Right ventricle myocardium inferior (tissue), 1 donor: ENCODE measurements at regions of chr3 and their contacts with region 1.

Region 1: DNA sequence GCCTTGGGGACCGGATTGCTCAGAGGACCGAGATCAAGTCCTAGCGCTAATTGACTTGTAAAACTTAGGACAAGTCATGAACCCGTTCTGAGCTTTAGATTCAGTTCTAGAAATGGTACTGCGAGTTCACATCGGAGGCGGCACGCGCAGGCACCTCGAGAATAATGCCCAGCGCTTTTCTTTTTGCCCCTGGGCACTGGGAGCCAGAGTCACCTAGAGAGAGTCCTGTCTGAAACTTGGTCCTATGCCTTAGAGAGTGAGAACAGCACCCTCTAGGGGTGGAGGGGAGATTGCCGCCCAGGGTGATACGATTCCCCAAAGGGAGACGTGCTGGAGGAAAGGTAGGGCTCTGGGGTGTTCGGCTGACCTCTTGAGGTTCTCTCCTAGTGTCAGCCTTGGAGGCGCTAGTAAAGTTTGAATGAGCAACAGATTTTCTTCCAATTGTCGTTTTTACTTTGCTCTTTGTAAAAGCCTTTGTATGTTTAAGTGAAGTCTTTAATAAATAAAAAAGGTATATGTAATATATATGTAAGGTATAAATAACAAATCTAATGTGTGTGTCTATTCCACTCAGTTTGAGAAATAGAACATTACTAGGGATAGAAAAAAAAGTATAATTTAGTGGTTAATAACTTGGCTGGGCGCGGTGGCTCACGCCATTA is 826 bp downstream of the EEF1AKMT4 start:
- DNase-seq: peak; percentile 87
- ATAC-seq: peak; percentile 82

Region 2: DNA sequence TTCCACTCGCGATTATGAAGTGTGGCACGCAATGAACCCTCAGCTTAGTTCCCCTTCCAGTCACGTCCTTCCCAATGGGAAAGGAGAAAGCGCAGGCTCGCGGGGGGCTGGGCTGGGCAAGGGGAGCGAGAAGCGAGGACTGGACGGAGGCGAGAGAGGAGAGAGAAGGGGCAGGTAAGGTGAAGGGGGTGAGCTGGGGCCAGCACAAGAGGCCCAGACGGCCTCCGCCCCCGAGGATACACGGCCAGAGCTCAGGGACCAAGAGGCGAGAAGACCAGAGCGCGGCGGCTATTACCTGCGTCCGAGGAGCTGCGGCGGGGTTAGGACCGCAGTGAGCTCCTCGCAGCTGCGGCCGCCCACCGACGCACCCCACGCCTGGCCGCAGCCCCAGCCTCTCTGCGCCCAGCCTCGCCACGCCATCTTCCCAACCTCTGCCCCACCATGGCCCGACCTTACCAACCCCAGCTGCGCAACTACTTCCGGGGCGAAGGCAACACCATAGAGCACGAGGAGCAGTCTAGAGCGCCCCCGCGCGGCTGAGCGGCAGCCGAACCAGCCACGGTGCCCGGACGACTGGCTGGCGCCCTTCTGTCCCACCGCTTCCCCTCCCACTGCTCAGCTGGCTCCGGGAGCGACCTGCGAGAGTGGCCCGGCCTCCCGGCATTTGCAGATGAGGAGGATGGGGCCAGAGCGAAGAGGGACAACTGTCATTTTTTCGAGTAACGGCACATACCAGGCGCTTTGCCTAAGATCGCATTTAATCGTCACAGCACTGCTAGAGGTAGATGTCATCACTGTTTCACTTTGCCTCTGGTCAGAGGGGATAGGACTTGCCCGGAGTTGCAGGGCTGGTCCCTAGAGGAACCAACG is 365.6 kb before region 1 on chr3 and contains the start of gene PARL:
- intact Hi-C with region 1: loop called (anchors 5 kb)
- DNase-seq: peak; percentile 99
- ATAC-seq: peak; percentile 100
- total RNA-seq, gene PARL: 56.5 TPM

Region 3: DNA sequence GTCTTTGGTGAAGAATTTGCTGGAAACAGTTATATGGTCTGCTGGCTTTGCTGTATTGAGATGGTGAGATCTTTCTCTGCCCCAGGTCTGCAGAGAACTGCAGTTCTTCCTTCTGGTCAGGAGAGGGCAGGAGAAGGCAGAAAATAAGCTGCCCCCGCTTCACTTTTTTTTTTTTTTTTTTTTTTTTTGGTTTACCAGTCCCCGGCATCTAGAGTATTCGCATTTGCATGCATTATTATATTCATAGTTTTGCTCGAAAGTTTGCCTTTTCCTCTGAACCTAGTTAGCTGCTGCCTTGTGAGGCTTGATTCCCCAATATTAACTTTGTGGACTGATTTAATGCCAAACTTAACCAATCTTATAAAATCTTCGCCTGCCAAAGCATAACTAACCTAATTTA is 355.0 kb before region 1 on chr3:
- intact Hi-C with region 1: loop called (anchors 2 kb)
- DNase-seq: no peak
- ATAC-seq: no peak

Region 4: GRCh38 chr3:184017672-184018423 is 232.4 kb before region 1 on chr3 and contains the start of gene ABCC5:
- intact Hi-C with region 1: loop called (anchors 5 kb)
- DNase-seq: peak; percentile 97
- ATAC-seq: peak; percentile 99
- total RNA-seq, gene ABCC5: 48.2 TPM

Region 5: DNA sequence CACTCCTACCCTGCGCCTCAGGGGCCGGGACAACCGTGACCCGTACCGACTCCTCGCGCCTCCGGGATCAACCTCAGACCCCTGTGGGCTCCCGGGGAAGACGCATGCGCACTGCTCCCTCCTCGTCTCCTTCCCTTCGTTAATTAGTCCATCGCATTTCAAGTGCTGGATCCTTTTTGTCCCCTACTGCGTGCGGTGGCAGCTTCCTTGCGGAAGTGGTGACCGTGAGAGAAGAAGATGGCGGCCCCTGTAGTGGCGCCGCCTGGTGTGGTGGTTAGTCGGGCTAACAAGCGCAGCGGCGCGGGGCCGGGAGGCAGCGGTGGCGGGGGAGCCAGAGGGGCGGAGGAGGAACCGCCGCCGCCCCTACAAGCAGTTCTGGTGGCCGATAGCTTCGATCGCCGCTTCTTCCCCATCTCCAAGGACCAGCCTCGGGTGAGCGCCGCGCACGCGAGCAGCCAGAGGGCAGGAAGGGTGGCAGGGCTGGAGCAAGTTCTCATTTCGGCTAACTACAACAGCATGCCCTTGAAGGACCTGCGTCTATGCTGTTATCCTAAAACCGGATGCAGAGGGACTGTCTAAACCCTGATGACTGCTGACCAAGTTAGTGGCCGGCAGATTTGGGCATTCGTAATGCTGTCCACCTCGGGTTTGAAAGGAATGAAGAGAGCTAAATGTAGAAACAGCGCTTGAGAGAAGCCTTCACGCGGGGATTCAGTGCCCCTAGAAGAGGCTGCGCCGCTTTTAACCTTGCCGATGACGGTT is 115.0 kb before region 1 on chr3 and contains the start of gene EIF2B5:
- intact Hi-C with region 1: loop called (anchors 1 kb)
- DNase-seq: peak; percentile 95
- ATAC-seq: peak; percentile 97
- total RNA-seq, gene EIF2B5: 32.2 TPM

Region 6: GRCh38 chr3:184154885-184155643 is 95.2 kb before region 1 on chr3 and contains the start of gene DVL3:
- intact Hi-C with region 1: loop called (anchors 1 kb)
- DNase-seq: peak; percentile 85
- ATAC-seq: peak; percentile 90
- total RNA-seq, gene DVL3: 60.7 TPM